ENCODE measurements at regions of chr3 and their contacts with region 1.

Region 1: GRCh38 chr3:117417411-117417810 is 707.8 kb downstream of the TUSC7 start:
- DNase-seq: peak; percentile 33
- ATAC-seq: no peak
- H3K4me3 ChIP-seq: no peak overlapping the region
- H3K27ac ChIP-seq: no peak overlapping the region
- H3K4me1 ChIP-seq: no peaks in the 10 kb centered on the region
- H3K27me3 ChIP-seq: no peaks in the 10 kb centered on the region
- CTCF ChIP-seq: no peak
- POLR2A ChIP-seq: no peak
- RAD21 ChIP-seq: no peak

Region 2: DNA sequence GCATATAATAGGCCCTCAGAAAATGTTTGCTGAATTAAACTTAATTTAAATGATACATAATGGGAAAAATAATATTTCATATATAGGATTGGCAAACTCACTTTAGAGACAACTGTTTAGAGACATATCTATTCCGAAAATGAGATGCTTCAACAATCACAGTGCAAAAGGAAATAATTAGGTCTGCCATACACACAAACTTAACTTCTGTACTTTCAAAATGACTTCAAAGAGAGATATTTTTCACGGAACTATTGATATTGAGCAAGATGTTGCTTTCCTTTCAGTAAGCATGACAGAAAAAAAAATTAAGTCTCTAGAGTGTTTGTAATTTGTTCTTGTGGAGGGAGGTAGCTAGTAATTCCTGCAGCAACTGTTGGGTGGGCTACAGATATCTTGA is 61.7 kb after region 1 on chr3:
- CTCF ChIA-PET with region 1: no interaction called
- POLR2A ChIA-PET with region 1: no interaction called
- dilution Hi-C with region 1: no loop called
- in situ Hi-C with region 1: no loop called
- intact Hi-C with region 1: loop called (anchors 2 kb)
- DNase-seq: no peak
- ATAC-seq: no peak
- H3K4me3 ChIP-seq: no peak overlapping the region
- H3K27ac ChIP-seq: no peak overlapping the region
- H3K4me1 ChIP-seq: no peaks in the 10 kb centered on the region
- H3K27me3 ChIP-seq: no peaks in the 10 kb centered on the region
- CTCF ChIP-seq: no peak
- POLR2A ChIP-seq: no peak
- RAD21 ChIP-seq: no peak